Stomach (tissue), 19 donors: ENCODE measurements at regions of chr16 and their contacts with region 1.

Region 1: GRCh38 chr16:55465077-55465896 is 13.7 kb upstream of the MMP2 start:
- DNase-seq: peak; percentile 94 to 95
- H3K4me3 ChIP-seq: no peak overlapping the region
- H3K27ac ChIP-seq: no peak overlapping the region
- H3K4me1 ChIP-seq: peaks cover 0 to 5% (median 2%) of the 10 kb centered on the region in 4 donors
- H3K27me3 ChIP-seq: no peaks in the 10 kb centered on the region
- CTCF ChIP-seq: peak in 6 of 7 experiments; percentile 56 to 100 (median 99)
- EP300 ChIP-seq: no peak
- POLR2A ChIP-seq: no peak

Region 2: DNA sequence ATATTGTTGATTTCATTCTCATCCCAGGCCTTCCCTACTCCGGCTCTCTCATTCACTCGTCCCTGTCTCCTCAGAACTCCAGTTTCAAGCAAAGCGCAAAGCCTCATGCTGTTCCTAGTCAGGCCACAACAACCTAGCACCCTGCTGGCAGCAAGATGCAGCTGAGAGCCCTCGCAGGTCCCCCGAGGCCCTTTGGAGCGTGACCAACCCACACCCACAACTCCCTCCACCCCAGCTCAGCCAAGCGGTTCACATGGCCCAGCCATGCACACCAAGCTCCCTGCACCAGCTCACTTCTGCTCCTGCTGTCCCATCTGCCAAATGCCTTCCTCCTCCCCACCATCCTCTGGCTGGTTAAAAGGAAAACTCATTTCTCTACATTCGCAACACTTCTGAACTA is 338.8 kb before region 1 on chr16:
- intact Hi-C with region 1: no loop called
- DNase-seq: no peak
- H3K4me3 ChIP-seq: no peak overlapping the region
- H3K27ac ChIP-seq: no peak overlapping the region
- H3K4me1 ChIP-seq: no peaks in the 10 kb centered on the region
- H3K27me3 ChIP-seq: no peaks in the 10 kb centered on the region
- CTCF ChIP-seq: no peak
- EP300 ChIP-seq: no peak
- POLR2A ChIP-seq: no peak

Region 3: DNA sequence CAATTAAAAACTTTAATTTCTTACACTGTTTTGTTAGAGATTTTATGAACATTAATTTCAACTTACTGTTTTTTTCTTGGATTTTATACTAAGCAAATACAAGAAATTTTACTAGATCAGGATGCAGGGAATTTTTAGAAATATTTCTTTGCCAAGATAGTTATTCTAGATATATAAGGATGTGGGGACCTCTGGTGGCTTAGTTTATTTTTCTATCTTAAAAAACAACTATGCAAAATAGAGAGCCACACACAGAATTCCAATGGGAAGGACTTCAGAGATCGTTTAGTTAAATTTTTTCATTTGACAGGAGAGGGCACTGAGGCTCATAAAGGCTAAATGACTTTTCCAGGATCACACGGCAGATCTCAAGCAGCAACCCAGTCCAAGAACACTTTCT is 78.2 kb after region 1 on chr16:
- intact Hi-C with region 1: loop called (anchors 5 kb)
- DNase-seq: peak in 1 of 2 donors; percentile 62
- H3K4me3 ChIP-seq: no peak overlapping the region
- H3K27ac ChIP-seq: no peak overlapping the region
- H3K4me1 ChIP-seq: peaks cover 0 to 8% (median 0%) of the 10 kb centered on the region in 4 donors
- H3K27me3 ChIP-seq: no peaks in the 10 kb centered on the region
- CTCF ChIP-seq: peak in 3 of 7 experiments; percentile 17 to 37 (median 27)
- EP300 ChIP-seq: no peak
- POLR2A ChIP-seq: no peak

Region 4: DNA sequence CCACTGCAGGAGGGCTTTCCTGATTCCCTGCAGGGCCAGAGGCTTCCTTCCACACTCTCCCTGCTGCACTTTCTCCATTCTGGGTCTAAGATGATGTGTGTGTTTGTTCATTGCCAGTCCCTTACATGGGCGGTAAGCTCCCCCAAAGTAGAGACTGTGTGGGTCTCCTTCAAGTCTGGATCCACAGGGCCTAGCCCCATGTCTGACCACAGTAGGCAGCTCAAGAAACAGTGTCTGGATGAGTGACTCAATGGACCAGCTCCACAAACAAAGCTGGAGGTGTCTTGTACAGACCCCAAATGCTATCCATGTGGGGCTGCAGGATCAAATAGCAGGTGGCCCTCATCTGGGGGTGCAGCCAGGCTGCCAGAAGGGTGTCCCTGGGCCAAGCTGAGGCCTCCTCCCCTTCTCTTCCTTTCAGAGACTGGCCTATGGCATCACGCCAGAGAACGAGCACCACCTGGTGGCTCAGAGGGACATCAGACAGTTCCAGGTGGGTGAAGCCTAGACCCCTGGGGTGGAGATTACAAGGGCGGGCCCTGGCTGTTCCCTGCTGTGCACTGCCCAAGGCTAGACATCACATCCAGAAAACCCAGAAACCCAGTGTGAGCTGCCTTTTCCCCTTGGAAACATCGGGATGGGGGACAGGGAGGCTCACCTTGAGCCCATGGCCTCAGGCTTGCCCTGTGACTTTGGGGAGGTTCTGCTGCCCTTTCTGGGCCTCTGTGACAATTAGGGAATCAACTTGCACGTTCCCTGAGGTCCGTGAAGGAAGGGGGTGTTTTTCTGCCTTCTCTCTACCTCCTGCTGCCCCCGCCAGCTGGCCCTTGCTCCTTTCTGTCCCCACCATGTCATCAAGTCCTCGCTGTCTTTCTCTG is 236.4 kb after region 1 on chr16:
- intact Hi-C with region 1: loop called (anchors 5 kb)
- DNase-seq: peak; percentile 74 to 76
- H3K4me3 ChIP-seq: no peak overlapping the region
- H3K27ac ChIP-seq: no peak overlapping the region
- H3K4me1 ChIP-seq: no peaks in the 10 kb centered on the region
- H3K27me3 ChIP-seq: peaks cover 0 to 15% (median 0%) of the 10 kb centered on the region in 3 donors
- CTCF ChIP-seq: peak in 5 of 7 experiments; percentile 11 to 58 (median 55)
- EP300 ChIP-seq: no peak
- POLR2A ChIP-seq: no peak

Region 5: DNA sequence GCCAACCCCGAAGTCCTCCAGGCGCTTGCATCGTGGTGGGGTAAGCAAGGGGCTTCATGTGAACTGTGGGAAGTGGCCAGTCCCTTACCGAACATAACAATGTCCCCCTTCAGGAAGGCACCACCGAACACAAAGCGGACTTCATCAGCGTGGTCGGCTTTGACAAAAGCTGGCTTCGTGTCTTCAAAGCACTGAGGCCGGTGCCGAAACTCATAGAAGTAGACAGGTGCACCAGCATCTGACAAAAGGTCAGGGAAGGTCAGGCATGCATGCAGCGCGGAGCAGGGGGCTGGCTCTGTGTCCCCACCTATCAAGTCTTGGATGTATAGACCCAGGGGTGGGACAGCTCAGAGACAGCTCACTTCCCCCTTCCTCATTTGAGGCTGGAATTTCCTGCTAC is 384.2 kb after region 1 on chr16:
- intact Hi-C with region 1: loop called (anchors 5 kb)
- DNase-seq: no peak
- H3K4me3 ChIP-seq: no peak overlapping the region
- H3K27ac ChIP-seq: no peak overlapping the region
- H3K4me1 ChIP-seq: no peaks in the 10 kb centered on the region
- H3K27me3 ChIP-seq: peaks cover 0 to 46% (median 0%) of the 10 kb centered on the region in 3 donors
- CTCF ChIP-seq: no peak
- EP300 ChIP-seq: no peak
- POLR2A ChIP-seq: no peak